Panc1 (cell line): ENCODE measurements at regions of chr3 and their contacts with region 1.

Region 1: DNA sequence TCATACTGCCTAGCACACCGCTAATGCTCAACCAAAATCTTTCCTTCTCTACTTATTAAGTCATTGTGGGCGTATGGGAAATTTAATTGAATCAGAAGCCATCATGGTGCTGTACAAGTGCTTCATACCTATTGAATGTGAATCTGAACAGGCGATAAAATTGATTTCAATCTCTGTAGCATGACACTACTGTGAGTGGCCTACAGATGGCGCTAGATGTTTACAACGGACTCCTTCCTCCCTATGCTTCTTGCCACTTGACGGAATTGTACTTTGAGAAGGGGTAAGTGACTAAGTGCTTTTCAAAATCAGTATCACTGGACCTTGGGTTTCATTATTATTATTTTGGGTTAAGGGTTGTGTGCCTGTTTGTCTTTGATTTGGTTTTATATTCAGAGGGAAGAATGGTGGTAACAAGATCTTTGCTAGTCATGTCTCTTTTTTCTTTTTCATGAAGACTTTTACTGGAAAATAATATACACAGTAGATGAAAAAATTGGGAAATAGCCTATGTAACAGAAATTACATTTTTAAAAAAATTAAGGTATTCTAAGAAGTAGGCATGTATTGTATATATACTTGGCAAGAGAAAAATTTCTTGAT is 35.4 kb downstream of the ACP3 start:
- DNase-seq: peak; percentile 36
- ATAC-seq: peak; percentile 84
- H3K4me3 ChIP-seq: no peak overlapping the region
- H3K27ac ChIP-seq: no peak overlapping the region
- H3K4me1 ChIP-seq: no peaks in the 10 kb centered on the region
- H3K27me3 ChIP-seq: peaks cover 2% of the 10 kb centered on the region; the same call in 1 of the 2 replicates
- CTCF ChIP-seq: peak; percentile 91

Region 2: DNA sequence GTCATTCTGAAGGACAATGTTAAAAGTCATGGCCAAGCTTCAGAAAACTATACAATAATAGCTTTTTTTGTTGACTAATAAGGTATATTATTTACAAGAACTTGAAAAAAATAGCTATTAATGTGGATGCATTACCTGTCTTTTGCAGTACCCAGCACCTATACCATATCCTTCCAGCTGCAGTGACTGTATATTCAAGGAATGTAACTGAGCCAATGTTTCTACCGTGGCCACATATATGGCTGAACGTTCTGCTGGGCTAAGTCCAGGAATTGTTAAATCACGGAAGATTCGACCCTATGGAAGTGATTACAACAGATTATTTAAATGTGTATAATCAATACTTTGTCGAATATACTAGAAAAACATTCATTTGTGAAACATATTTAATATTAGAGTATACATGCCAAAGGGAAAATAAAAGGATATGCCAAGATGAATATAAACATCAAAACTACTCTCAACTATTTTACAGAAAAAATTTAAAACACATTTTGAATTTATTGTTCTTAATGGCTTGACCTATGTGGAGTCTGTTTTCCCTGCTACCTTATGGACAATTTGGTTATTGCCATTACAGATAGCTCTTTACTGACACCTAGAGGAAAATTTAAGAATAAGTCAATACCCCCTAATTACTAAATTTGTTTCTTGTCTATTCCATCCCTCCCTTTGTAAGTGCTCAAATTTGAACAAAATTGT is 289.3 kb after region 1 on chr3:
- CTCF ChIA-PET with region 1: no interaction called
- POLR2A ChIA-PET with region 1: no interaction called
- in situ Hi-C with region 1: no loop called
- intact Hi-C with region 1: loop called (anchors 2 kb)
- DNase-seq: no peak
- ATAC-seq: peak; percentile 82
- H3K4me3 ChIP-seq: no peak overlapping the region
- H3K27ac ChIP-seq: no peak overlapping the region
- H3K4me1 ChIP-seq: peaks cover 2% of the 10 kb centered on the region; the same call in 1 of the 2 replicates
- H3K27me3 ChIP-seq: no peaks in the 10 kb centered on the region
- CTCF ChIP-seq: peak; percentile 80; the same call in 1 of the 2 replicates